WTC11 (cell line): ENCODE measurements at regions of chr10 and their contacts with region 1.

Region 1: DNA sequence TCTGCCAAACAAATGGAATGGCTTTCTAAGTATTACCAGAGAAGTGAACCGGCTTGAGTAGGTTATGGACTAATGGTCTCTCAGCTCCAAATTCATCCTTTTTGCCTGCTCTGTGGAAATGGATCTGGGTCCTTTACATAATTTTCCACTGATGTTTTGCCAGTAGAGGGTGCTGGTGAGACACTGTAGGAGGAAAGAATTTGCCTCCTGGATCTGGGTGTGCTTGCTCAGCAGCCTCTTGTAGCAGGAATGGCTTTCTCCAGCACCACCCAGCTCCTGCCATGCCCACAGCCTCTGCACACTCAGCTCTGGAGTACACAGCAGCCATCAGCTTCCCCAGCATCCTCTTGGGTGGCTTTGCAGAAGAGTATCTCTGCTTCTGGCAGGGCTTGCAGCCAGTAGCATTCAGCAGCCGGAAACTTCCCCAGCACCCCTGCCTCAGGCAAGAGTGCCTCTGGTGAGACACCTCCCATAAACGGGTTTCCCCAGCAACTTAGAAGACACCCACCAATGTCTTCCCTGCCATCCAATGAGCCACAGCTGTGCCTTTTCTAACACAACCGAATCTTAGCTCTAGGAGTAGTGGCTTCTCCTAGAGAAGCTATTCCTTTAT is 235.0 kb upstream of the PLPP4 start:
- DNase-seq: peak; percentile 58
- ATAC-seq: peak; percentile 99
- H3K4me3 Mint-ChIP-seq: no peak overlapping the region
- H3K27ac Mint-ChIP-seq: no peak overlapping the region
- H3K4me1 Mint-ChIP-seq: no peaks in the 10 kb centered on the region
- H3K27me3 Mint-ChIP-seq: no peaks in the 10 kb centered on the region
- CTCF ChIP-seq: peak; percentile 67

Region 2: GRCh38 chr10:120011359-120012130 is 210.4 kb before region 1 on chr10:
- CTCF ChIA-PET with region 1: interaction called, 14 read pairs
- POLR2A ChIA-PET with region 1: no interaction called
- DNase-seq: peak; percentile 73
- ATAC-seq: peak; percentile 94
- H3K4me3 Mint-ChIP-seq: no peak overlapping the region
- H3K27ac Mint-ChIP-seq: no peak overlapping the region
- H3K4me1 Mint-ChIP-seq: peaks cover 9% of the 10 kb centered on the region; the same call in 1 of the 2 replicates
- H3K27me3 Mint-ChIP-seq: peaks cover 13% of the 10 kb centered on the region
- CTCF ChIP-seq: no peak

Region 3: DNA sequence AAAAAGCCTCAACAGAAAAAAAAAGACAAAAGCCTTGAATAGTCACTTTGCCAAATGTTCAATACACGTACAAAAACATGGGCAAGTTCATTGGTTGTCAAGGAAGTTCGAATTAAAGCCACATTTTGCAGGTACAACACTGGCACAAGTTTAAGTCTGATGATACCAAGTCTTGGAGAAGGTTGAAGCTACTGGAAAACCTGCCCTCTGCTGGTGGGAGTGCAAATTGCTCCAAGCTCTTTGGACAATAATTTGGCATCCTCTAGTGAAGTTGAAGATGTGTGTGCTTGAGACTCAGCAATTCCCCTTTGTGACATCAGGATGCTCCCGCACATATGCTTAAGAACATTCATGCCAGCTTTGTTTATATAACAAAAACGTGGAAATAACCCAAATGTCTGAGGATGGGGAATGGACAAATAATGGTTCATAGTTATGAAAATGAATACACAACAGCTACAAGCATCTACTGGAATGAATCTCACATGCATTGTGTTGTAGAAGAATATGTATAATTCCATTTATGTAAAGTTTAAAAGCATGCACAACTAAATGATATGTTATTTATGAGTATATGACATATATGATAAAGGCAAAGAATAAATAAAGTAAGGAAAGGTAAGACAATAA is 115.0 kb after region 1 on chr10:
- CTCF ChIA-PET with region 1: interaction called, 53 read pairs
- POLR2A ChIA-PET with region 1: no interaction called
- DNase-seq: peak; percentile 78
- ATAC-seq: peak; percentile 61
- H3K4me3 Mint-ChIP-seq: no peak overlapping the region
- H3K27ac Mint-ChIP-seq: no peak overlapping the region
- H3K4me1 Mint-ChIP-seq: peaks cover 13% of the 10 kb centered on the region
- H3K27me3 Mint-ChIP-seq: no peaks in the 10 kb centered on the region; the same call in 1 of the 2 replicates
- CTCF ChIP-seq: peak; percentile 77

Region 4: DNA sequence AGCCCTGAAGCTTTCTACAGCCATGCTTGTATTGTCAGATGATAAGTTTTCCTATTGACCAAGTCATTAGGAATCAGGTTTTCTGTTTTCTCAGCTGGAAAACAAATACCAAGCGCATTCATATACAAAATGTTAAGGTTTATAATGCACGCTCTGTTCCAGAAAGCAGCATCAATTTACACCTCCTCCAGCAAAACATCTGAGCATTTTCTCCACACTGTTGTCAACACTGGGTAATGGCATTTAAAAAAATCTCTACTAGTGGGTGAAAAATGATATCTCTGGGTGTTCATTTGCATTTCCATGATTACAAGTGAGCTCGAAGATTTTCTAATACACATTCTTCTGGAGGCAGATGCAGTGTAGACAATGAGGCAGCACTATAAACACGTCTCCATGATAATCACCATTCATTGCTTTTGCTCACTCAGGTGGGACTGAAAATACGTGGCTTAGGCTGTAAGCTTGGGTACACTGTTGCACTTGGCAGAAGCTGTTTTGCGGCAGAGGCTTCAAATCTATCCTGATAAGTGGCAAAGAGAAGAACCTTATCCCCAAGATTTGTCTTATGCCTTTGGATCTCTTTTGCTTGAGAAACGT is 120.2 kb after region 1 on chr10:
- CTCF ChIA-PET with region 1: interaction called, 53 read pairs
- POLR2A ChIA-PET with region 1: no interaction called
- DNase-seq: no peak
- ATAC-seq: peak; percentile 58; the same call in 1 of the 2 replicates
- H3K4me3 Mint-ChIP-seq: no peak overlapping the region
- H3K27ac Mint-ChIP-seq: no peak overlapping the region; the same call in 1 of the 2 replicates
- H3K4me1 Mint-ChIP-seq: peaks cover 20% of the 10 kb centered on the region
- H3K27me3 Mint-ChIP-seq: no peaks in the 10 kb centered on the region
- CTCF ChIP-seq: no peak